Activated T-helper 2 cell treated with anti-CD3 and anti-CD28 coated beads, Interferon-gamma antibody, Interleukin-2, Interleukin-4, amounts not matched to agents 10 μg/mL and 5 μg/mL and 100 μg/mL, durations not matched to agents 14 hours and 24 hours and 36 hours (primary cell): ENCODE measurements at regions of chr20 and their contacts with region 1.

Region 1: DNA sequence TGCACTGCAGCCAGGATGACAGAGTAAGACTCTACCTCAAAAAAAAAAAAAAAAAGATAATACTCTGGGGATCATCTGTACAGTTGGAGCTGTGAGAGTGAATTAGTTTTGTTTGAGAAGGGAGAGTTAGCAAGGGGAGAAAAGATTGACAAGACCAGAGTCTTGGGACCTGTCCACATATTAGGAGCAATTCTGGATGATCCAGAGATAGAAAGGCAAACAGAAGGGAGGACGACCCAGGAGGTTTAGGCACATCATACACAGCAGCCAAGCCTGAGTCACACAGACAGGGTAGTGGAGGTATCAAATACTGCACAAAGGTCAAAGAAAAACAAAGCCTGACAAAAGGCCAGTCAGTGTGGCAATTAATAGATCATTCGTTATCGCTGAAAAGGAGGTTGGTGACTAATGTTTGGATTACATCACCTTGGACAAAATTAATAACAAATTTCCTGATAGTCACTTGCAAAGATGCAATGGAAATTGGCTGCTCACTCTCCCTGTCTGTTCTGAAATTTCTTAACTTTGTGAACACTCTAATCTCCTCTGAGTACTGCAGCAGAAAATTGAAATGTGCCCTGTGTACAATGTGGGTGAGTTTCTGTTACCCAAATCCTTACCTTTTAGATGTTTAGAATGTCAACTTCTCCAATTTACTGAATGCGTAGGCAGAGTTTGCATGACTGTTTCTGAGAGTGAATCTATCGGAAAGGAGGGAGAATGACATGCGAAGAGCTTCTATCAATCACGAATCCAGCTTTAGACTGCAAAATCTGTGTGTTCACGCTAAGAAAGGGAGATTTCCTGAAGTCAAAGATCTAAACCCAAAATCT is 105.4 kb downstream of the TSHZ2 start:
- DNase-seq: no peak
- H3K4me3 Mint-ChIP-seq: no peak overlapping the region
- H3K27ac Mint-ChIP-seq: no peak overlapping the region
- H3K4me1 Mint-ChIP-seq: peaks cover 28% of the 10 kb centered on the region
- H3K27me3 Mint-ChIP-seq: no peaks in the 10 kb centered on the region

Region 2: GRCh38 chr20:52945862-52946522 is 131.6 kb before region 1 on chr20:
- intact Hi-C with region 1: no loop called
- DNase-seq: no peak
- H3K4me3 Mint-ChIP-seq: no peak overlapping the region
- H3K27ac Mint-ChIP-seq: no peak overlapping the region
- H3K4me1 Mint-ChIP-seq: no peaks in the 10 kb centered on the region
- H3K27me3 Mint-ChIP-seq: no peaks in the 10 kb centered on the region

Region 3: DNA sequence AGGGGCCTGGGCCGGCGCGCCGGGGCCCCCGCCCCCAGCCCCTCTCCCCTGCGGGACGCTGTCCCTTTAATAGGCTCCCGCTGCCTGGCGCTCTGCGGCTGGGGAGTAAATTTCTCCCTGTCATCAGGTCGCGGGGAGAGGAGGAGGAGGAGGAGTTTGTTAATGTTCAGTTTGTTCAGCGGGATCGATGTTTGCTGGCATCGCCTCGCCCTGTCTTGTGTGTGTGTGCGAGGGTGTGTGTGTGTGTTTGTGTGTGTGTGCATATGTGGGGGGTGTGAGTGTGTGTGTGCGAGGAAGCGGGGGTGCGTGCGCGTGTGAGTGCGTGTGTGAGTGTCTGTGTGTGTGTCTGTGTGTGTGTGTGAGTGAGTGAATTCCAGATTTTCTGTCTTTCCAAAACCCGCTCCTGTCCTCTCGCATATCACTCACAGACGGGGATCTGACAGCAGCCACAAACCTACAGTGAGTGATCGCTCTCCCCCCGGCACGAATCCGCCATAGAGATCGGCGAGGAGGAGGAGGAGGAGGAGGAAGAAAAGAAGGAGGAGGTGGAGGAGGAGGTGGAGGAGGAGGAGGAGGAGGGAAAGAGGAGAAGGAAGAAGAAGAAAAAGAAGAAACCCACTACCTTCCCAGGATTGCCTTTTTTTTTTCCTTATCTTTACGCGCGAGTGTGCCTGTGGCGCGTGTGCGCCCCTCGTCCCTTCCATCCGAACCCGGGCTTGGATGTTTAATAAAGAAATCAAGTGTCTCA is 105.2 kb before region 1 on chr20 and contains the start of gene TSHZ2:
- intact Hi-C with region 1: loop called (anchors 1 kb)
- DNase-seq: peak; percentile 20
- H3K4me3 Mint-ChIP-seq: peak within 1 kb of the TSS; percentile 93
- H3K27ac Mint-ChIP-seq: peak within 1 kb of the TSS; percentile 94
- H3K4me1 Mint-ChIP-seq: peaks cover 37% of the 10 kb centered on the region
- H3K27me3 Mint-ChIP-seq: peaks cover 17% of the 10 kb centered on the region
- total RNA-seq, gene TSHZ2: 19.8 and 23.0 TPM in 2 replicates

Region 4: DNA sequence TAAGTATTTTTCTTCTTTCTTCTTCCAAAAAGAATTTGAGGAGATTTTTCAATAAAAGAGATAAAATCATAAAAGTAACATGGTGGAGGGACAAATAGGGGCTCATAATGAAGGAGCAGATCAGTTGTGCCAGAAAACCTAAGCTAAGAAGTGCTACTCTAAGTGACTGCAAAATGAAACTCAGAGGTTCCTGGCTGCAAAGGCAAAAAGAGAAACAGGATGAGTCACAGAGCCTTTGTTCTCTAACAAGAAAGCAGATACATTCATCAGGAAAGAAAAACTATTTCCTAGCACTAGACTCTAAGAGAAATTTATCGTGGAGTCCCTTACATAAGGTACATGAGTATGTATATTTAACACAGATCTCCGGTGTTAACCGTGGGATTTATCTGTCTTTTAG is 55.7 kb before region 1 on chr20:
- intact Hi-C with region 1: loop called (anchors 1 kb)
- DNase-seq: no peak
- H3K4me3 Mint-ChIP-seq: no peak overlapping the region
- H3K27ac Mint-ChIP-seq: peak overlapping the region; percentile 56
- H3K4me1 Mint-ChIP-seq: peaks cover 50% of the 10 kb centered on the region
- H3K27me3 Mint-ChIP-seq: no peaks in the 10 kb centered on the region

Region 5: DNA sequence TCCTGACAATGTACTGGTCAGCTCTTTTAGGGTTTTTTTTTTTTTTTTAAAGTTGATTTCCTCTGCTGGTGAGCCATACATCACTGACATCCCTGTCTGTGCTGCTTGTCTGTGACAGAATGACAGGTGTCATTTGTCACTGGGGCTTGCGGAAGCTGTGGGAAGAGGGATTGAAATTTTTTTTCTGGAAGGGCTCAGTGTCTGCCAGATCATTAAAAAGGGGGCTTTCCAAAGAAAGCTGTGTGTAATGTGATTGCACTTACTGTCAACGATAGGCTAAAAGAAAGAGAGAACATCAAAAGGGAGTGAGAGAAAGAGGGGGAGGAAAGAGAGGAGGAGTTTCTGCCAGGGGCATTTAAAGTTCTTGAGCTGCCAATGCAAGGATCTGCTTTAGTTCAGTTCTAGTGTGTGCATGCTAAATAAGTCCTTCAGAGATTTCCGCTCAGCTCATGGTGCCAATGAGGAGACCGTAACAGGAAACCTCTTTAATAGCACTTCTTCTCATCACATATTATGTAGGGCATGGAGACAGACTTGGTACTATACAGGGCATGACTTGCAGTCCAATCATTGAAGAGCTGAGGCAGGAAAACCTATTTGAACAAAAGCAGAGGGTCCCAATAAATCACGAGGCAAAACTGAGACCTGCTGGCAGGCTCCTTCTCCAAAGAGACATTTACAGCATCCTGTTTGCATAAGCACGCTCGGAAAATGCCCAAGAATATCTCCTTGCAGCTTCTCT is 71.7 kb after region 1 on chr20:
- intact Hi-C with region 1: loop called (anchors 1 kb)
- DNase-seq: no peak
- H3K4me3 Mint-ChIP-seq: no peak overlapping the region
- H3K27ac Mint-ChIP-seq: no peak overlapping the region
- H3K4me1 Mint-ChIP-seq: peaks cover 27% of the 10 kb centered on the region
- H3K27me3 Mint-ChIP-seq: peaks cover 5% of the 10 kb centered on the region

Region 6: GRCh38 chr20:53216856-53217576 is 139.4 kb after region 1 on chr20:
- intact Hi-C with region 1: loop called (anchors 5 kb)
- DNase-seq: peak; percentile 58
- H3K4me3 Mint-ChIP-seq: no peak overlapping the region
- H3K27ac Mint-ChIP-seq: no peak overlapping the region
- H3K4me1 Mint-ChIP-seq: peaks cover 23% of the 10 kb centered on the region
- H3K27me3 Mint-ChIP-seq: peaks cover under 1% of the 10 kb centered on the region